Gastrocnemius medialis (tissue), 4 donors: ENCODE measurements at regions of chr7 and their contacts with region 1.

Region 1: DNA sequence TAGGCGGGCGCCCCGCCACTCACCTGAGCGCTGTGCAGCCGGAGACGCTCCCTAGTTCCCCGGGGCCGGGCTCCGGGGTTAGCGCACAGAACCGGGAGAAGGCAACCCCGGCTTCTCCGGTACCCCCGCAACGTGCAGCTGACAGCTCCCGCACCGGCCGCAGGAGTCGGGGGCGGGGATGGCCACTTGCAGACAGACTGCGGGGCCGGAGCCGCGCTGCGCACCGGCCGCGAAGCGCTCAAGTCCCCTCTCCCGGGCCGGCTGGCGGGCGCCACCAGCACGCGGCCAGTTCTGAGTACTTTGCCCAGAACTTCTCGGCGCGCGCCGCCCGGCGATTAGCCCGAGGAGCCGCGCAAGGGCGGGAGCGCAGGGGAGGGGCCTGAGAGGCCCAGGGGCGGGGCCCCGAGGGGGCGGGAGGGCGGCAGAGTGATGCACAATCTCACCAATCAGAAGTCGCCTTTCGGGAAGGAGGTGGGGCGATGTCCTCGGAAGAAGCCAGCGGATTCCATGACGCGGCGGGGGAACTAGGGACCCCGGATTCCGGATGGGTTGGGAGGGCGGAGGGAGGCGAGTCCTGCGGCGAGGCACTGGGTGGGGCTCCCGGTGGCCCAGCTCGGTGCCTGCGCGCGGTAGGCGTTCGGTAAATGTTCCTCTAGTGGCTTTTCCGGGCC is at the start of gene OSBPL3:
- DNase-seq: peak; percentile 90 to 91
- ATAC-seq: peak; percentile 92 to 93
- H3K4me3 ChIP-seq: peak within 1 kb of the TSS; percentile 70 to 94 (median 83)
- H3K27ac ChIP-seq: peak within 1 kb of the TSS; percentile 77 to 86 (median 83)
- H3K4me1 ChIP-seq: peaks cover 0 to 9% of the 10 kb centered on the region in 2 donors
- H3K27me3 ChIP-seq: no peaks in the 10 kb centered on the region
- CTCF ChIP-seq: no peak
- POLR2A ChIP-seq: peak; percentile 66 to 86
- total RNA-seq, gene OSBPL3: 3.1 to 7.0 (median 5.3) TPM

Region 2: GRCh38 chr7:24851786-24852185 is 128.2 kb before region 1 on chr7:
- in situ Hi-C with region 1: no loop called
- intact Hi-C with region 1: no loop called
- DNase-seq: no peak
- ATAC-seq: no peak
- H3K4me3 ChIP-seq: no peak overlapping the region
- H3K27ac ChIP-seq: no peak overlapping the region
- H3K4me1 ChIP-seq: no peaks in the 10 kb centered on the region
- H3K27me3 ChIP-seq: no peaks in the 10 kb centered on the region
- CTCF ChIP-seq: no peak
- POLR2A ChIP-seq: no peak

Region 3: GRCh38 chr7:24882989-24883621 is 96.9 kb before region 1 on chr7:
- in situ Hi-C with region 1: no loop called
- intact Hi-C with region 1: loop called (anchors 5 kb)
- DNase-seq: peak; percentile 76
- ATAC-seq: peak; percentile 83 to 94
- H3K4me3 ChIP-seq: no peak overlapping the region
- H3K27ac ChIP-seq: peak overlapping the region; percentile 48 to 73 (median 53)
- H3K4me1 ChIP-seq: peaks cover 34 to 40% of the 10 kb centered on the region in 2 donors
- H3K27me3 ChIP-seq: no peaks in the 10 kb centered on the region
- CTCF ChIP-seq: no peak
- POLR2A ChIP-seq: no peak

Region 4: GRCh38 chr7:24896031-24896501 is 83.9 kb before region 1 on chr7:
- in situ Hi-C with region 1: no loop called
- intact Hi-C with region 1: no loop called
- DNase-seq: no peak
- ATAC-seq: no peak
- H3K4me3 ChIP-seq: no peak overlapping the region
- H3K27ac ChIP-seq: no peak overlapping the region
- H3K4me1 ChIP-seq: peaks cover 0 to 6% of the 10 kb centered on the region in 2 donors
- H3K27me3 ChIP-seq: no peaks in the 10 kb centered on the region
- CTCF ChIP-seq: no peak
- POLR2A ChIP-seq: no peak

Region 5: DNA sequence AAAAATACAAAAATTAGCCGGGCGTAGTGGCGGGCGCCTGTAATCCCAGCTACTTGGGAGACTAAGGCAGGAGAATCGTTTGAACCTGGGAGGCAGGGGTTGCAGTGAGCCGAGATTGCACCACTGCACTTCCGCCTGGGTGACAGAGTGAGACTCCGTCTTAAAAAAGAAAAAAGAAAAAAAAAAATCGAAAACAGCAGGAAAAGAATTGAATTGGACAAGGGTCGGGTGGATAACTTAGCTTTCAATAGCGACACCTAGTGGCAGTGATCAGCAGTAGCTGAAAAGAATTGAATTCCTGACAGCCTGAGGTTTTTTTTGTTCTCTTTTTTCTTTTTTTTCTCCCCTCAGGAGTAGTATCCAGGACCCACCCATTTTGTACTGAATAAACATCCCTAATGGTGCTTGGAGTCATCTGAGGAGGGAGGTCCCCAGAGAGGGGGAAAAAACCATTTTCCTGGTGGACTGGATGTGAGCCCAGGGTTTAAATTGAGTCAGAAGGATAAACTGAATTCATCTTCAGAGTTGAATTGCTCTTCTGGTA is 90.0 kb after region 1 on chr7:
- in situ Hi-C with region 1: loop called in 1 of 4 experiments (anchors 10 kb)
- intact Hi-C with region 1: loop called (anchors 5 kb)
- DNase-seq: peak; percentile 14 to 24
- ATAC-seq: peak; percentile 83 to 88
- H3K4me3 ChIP-seq: peak overlapping the region; percentile 29 to 47 (median 36)
- H3K27ac ChIP-seq: no peak overlapping the region
- H3K4me1 ChIP-seq: peaks cover 0 to 3% of the 10 kb centered on the region in 2 donors
- H3K27me3 ChIP-seq: no peaks in the 10 kb centered on the region
- CTCF ChIP-seq: peak; percentile 70 to 88 (median 74)
- POLR2A ChIP-seq: no peak

Region 6: GRCh38 chr7:25125137-25125946 is 145.3 kb after region 1 on chr7 and contains the start of gene CYCS:
- in situ Hi-C with region 1: no loop called
- intact Hi-C with region 1: loop called (anchors 5 kb)
- DNase-seq: peak; percentile 99
- ATAC-seq: peak; percentile 94 to 95
- H3K4me3 ChIP-seq: peak within 1 kb of the TSS; percentile 63 to 96 (median 92)
- H3K27ac ChIP-seq: peak within 1 kb of the TSS; percentile 91 to 99 (median 98)
- H3K4me1 ChIP-seq: peaks cover 24% of the 10 kb centered on the region in 2 donors
- H3K27me3 ChIP-seq: no peaks in the 10 kb centered on the region
- CTCF ChIP-seq: peak in 1 of 5 experiments; percentile 12
- POLR2A ChIP-seq: peak; percentile 96 to 99
- total RNA-seq, gene CYCS: 97.9 to 186 (median 109) TPM